MCF 10A (cell line): ENCODE measurements at regions of chr11 and their contacts with region 1.

Region 1: DNA sequence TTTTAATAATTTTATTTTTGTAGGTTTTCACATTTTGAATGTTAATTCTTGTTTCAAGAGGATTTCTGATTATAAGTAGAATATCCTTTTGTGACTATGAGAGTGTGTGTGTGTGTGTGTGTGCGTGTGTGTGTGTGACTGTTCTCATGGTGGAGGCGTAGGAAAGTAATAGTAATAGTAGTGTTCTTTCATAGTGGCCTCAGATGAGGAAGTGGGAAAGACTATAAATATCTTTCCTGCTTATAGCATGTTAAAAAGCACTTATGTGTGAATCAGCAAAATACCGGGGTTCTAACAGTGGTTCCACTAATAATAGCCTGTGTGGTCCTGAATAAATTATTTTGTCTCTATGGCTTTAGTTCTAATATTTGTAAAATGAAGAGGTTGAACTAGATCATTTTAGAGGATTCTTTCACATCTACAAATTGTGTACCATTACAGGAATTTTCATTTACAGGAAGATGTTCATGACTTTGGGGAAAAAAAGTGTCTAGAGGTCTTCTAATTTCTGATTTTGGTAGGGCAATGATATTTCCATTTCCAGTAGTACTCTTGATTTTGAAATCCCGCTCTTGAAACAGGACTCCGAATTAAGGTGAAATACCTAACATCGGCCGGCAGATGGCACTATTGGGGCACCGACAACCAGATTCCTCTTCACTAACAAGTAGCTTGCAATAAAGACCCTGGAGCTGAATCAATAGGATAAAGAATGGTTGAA is 29.9 kb upstream of the OR10G7 start:
- DNase-seq: peak; percentile 83
- H3K4me3 Mint-ChIP-seq: no peak overlapping the region
- H3K27ac Mint-ChIP-seq: no peak overlapping the region
- H3K4me1 Mint-ChIP-seq: peaks cover 11% of the 10 kb centered on the region
- H3K27me3 Mint-ChIP-seq: peaks cover 16% of the 10 kb centered on the region
- CTCF ChIP-seq: peak; percentile 61

Region 2: GRCh38 chr11:123741159-123742028 is 329.7 kb before region 1 on chr11 and contains the start of gene ZNF202:
- CTCF ChIA-PET with region 1: interaction called, 7 read pairs
- POLR2A ChIA-PET with region 1: no interaction called
- intact Hi-C with region 1: loop called (anchors 5 kb)
- DNase-seq: peak; percentile 91
- H3K4me3 Mint-ChIP-seq: peak within 1 kb of the TSS; percentile 89
- H3K27ac Mint-ChIP-seq: peak within 1 kb of the TSS; percentile 87
- H3K4me1 Mint-ChIP-seq: peaks cover 13% of the 10 kb centered on the region
- H3K27me3 Mint-ChIP-seq: no peaks in the 10 kb centered on the region
- CTCF ChIP-seq: no peak
- total RNA-seq, gene ZNF202: 15.6 and 22.1 TPM in 2 replicates

Region 3: GRCh38 chr11:123945132-123945531 is 125.9 kb before region 1 on chr11:
- CTCF ChIA-PET with region 1: no interaction called
- POLR2A ChIA-PET with region 1: no interaction called
- intact Hi-C with region 1: no loop called
- DNase-seq: no peak
- H3K4me3 Mint-ChIP-seq: no peak overlapping the region
- H3K27ac Mint-ChIP-seq: no peak overlapping the region
- H3K4me1 Mint-ChIP-seq: no peaks in the 10 kb centered on the region
- H3K27me3 Mint-ChIP-seq: no peaks in the 10 kb centered on the region
- CTCF ChIP-seq: no peak

Region 4: DNA sequence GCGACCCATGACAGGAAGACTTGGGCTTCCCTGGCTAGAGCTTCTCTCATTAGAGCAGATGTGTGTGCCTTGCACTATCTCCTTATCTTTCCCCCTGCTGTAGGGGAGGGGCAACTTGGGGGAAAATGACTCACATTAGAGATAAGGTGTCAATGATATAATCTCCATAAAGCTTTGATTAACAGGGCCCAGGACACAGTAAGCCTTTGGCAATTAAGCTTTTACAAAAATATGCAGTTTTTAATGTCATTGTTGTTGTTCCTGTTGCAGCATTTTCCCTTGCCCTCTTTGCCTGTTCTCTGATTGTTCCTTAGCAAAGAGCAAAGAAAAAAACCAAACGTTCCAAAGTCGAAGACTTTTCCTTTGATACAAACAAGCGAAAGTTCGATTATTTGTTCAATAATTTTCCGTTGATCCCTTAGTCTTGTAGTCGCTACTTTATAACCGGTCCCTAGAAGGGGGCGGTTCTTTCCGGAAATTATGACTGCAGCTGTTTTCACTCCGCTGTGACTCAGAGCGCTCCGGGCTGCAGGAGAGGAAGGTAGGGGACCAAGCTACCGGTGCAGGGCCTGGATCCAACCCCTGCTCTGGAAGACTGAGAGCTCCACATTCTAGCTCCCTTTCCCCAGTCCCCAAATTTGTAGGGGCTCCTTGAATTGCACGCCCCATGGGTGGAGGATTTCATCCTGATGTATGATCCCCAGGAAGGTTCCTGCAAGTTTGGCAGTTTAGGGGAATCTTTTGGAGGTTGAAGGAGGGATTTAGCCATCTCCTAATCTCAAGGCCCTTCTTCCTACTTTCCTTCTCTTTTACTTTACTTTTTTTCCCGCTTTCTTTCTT is 44.1 kb after region 1 on chr11 and contains the start of gene VWA5A:
- CTCF ChIA-PET with region 1: interaction called, 9 read pairs
- POLR2A ChIA-PET with region 1: no interaction called
- intact Hi-C with region 1: loop called (anchors 2 kb)
- DNase-seq: peak; percentile 92
- H3K4me3 Mint-ChIP-seq: peak within 1 kb of the TSS; percentile 82
- H3K27ac Mint-ChIP-seq: peak within 1 kb of the TSS; percentile 64
- H3K4me1 Mint-ChIP-seq: peaks cover 5% of the 10 kb centered on the region
- H3K27me3 Mint-ChIP-seq: no peaks in the 10 kb centered on the region
- CTCF ChIP-seq: no peak
- total RNA-seq, gene VWA5A: 7.9 and 12.0 TPM in 2 replicates

Region 5: GRCh38 chr11:124277804-124278203 is 206.7 kb after region 1 on chr11:
- CTCF ChIA-PET with region 1: interaction called, 5 read pairs
- POLR2A ChIA-PET with region 1: no interaction called
- intact Hi-C with region 1: loop called (anchors 1 kb)
- DNase-seq: peak; percentile 12
- H3K4me3 Mint-ChIP-seq: no peak overlapping the region
- H3K27ac Mint-ChIP-seq: no peak overlapping the region
- H3K4me1 Mint-ChIP-seq: no peaks in the 10 kb centered on the region
- H3K27me3 Mint-ChIP-seq: no peaks in the 10 kb centered on the region
- CTCF ChIP-seq: no peak

Region 6: GRCh38 chr11:124402326-124402922 is 331.3 kb after region 1 on chr11:
- CTCF ChIA-PET with region 1: interaction called, 5 read pairs
- POLR2A ChIA-PET with region 1: no interaction called
- intact Hi-C with region 1: loop called (anchors 5 kb)
- DNase-seq: peak; percentile 90
- H3K4me3 Mint-ChIP-seq: no peak overlapping the region
- H3K27ac Mint-ChIP-seq: no peak overlapping the region
- H3K4me1 Mint-ChIP-seq: no peaks in the 10 kb centered on the region
- H3K27me3 Mint-ChIP-seq: peaks cover 33% of the 10 kb centered on the region
- CTCF ChIP-seq: peak; percentile 69